CD8-positive, alpha-beta T cell (primary cell): ENCODE measurements at regions of chr12 and their contacts with region 1.

Region 1: DNA sequence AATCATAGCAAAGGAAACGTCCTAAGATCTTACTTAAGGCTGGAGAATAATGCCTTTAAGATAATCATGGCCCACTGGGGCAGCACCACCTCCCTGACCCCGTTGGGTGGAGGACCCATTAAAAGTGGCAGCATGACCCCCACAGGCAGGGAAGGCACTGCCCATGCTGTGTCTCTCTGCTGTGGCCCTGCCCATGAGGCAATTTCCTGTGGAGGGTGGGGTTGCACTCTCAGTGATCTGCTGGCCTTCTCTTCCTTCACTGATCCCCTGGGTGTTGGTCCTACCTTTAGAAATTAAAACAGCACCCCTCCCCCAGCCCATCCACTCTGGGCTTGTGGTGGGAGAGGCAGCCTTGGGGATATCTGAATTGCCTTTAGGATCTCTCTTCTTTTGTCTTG is 17.3 kb downstream of the KLRK1 start:
- DNase-seq: peak in 2 of 9 experiments; percentile 37 to 60
- ATAC-seq: peak; percentile 30
- H3K4me3 ChIP-seq: peak overlapping the region; percentile 12 to 17
- H3K4me3 Mint-ChIP-seq: peak overlapping the region; percentile 43
- H3K27ac ChIP-seq: peak overlapping the region in 1 of 2 experiments; percentile 65
- H3K27ac Mint-ChIP-seq: peak overlapping the region; percentile 83
- H3K4me1 ChIP-seq: peaks cover 92% of the 10 kb centered on the region
- H3K4me1 Mint-ChIP-seq: peaks cover 82% of the 10 kb centered on the region
- H3K27me3 ChIP-seq: no peaks in the 10 kb centered on the region
- H3K27me3 Mint-ChIP-seq: no peaks in the 10 kb centered on the region
- CTCF ChIP-seq: no peak

Region 2: GRCh38 chr12:10409387-10409786 is 36.9 kb after region 1 on chr12 and contains the start of gene KLRC4:
- CTCF ChIA-PET with region 1: interaction called, 6 read pairs
- POLR2A ChIA-PET with region 1: interaction called, 3 read pairs
- intact Hi-C with region 1: loop called (anchors 5 kb)
- DNase-seq: peak in 5 of 9 experiments; percentile 19 to 56 (median 37)
- ATAC-seq: peak; percentile 75
- H3K4me3 ChIP-seq: peak within 1 kb of the TSS; percentile 23 to 62
- H3K4me3 Mint-ChIP-seq: peak within 1 kb of the TSS; percentile 86
- H3K27ac ChIP-seq: peak within 1 kb of the TSS in 1 of 2 experiments; percentile 66
- H3K27ac Mint-ChIP-seq: peak within 1 kb of the TSS; percentile 89
- H3K4me1 ChIP-seq: peaks cover 15% of the 10 kb centered on the region
- H3K4me1 Mint-ChIP-seq: peaks cover 26% of the 10 kb centered on the region
- H3K27me3 ChIP-seq: no peaks in the 10 kb centered on the region
- H3K27me3 Mint-ChIP-seq: no peaks in the 10 kb centered on the region
- CTCF ChIP-seq: no peak
- total RNA-seq, gene KLRC4: 14.3 to 16.0 TPM